Panc1 (cell line): ENCODE measurements at regions of chr5 and their contacts with region 1.

Region 1: GRCh38 chr5:134873987-134874830 is at the start of gene TXNDC15:
- DNase-seq: peak; percentile 42
- ATAC-seq: peak; percentile 96
- H3K4me3 ChIP-seq: peak within 1 kb of the TSS; percentile 72 to 74
- H3K27ac ChIP-seq: peak within 1 kb of the TSS; percentile 97
- H3K4me1 ChIP-seq: peaks cover 14% of the 10 kb centered on the region
- H3K27me3 ChIP-seq: no peaks in the 10 kb centered on the region
- CTCF ChIP-seq: no peak
- total RNA-seq, gene TXNDC15: 47.4 TPM

Region 2: DNA sequence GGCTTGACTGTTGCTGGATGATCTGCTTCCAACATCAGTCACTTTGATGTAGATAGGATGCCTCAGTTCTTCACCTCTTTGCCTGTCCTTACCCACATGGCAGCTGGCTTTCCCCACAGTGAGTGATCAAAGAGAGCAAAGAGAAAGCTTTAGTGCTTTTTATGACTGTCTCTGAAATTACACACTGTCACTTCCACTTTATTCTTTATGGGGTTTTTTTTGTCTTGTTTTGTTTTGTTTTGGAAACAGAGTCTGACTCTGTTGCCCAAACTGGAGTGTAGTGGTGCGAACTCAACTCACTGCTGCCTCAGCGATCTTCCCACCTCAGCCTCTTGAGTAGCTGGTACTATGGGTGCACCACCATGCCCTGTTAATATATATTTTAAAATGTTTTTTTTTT is 60.8 kb before region 1 on chr5:
- CTCF ChIA-PET with region 1: no interaction called
- POLR2A ChIA-PET with region 1: interaction called, 11 read pairs
- in situ Hi-C with region 1: no loop called
- intact Hi-C with region 1: no loop called
- DNase-seq: no peak
- ATAC-seq: no peak
- H3K4me3 ChIP-seq: no peak overlapping the region
- H3K27ac ChIP-seq: no peak overlapping the region
- H3K4me1 ChIP-seq: no peaks in the 10 kb centered on the region
- H3K27me3 ChIP-seq: no peaks in the 10 kb centered on the region
- CTCF ChIP-seq: no peak